Transverse colon (tissue), 4 donors: ENCODE measurements at regions of chr7 and their contacts with region 1.

Region 1: DNA sequence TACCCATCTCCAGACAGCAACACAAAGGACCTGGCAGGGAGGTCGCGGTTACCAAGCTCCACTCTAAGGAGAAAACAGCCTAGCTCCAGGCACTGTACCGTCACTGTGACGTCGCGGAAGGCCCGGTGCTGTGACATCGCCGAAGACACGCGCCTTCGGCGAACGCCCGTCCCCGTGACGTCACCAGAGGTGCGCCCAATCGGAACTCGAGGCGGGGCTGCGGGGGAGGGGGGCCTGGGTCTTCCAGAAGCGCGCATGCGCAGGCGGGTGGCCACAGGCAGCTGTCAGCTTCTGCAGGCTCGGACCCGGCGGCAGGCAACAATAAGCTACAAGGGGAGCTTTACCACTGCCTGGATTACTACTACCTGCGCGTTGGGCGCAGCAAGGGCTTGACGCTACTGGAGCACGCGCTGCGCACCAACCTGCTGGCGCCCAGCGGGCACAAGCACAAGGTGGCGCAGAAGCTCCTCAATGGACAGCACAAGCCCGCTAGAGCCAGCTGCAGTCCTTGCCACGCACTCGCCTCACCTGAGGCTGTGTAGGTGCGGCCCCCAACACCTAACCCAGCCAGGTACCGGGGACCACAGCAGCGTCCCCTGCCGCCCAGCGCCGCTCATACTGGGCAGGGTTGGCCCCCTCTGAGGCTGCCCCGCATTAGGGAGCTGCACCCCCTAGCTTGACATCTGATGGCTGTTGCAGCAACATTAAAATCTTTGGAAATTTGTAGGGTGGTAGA is 208.4 kb downstream of the TPST1 start:
- DNase-seq: peak; percentile 82
- H3K4me3 ChIP-seq: peak overlapping the region; percentile 19 to 52 (median 32)
- H3K27ac ChIP-seq: peak overlapping the region; percentile 32 to 52 (median 46)
- H3K4me1 ChIP-seq: peaks cover 8 to 17% (median 11%) of the 10 kb centered on the region in 4 donors
- H3K27me3 ChIP-seq: no peaks in the 10 kb centered on the region
- CTCF ChIP-seq: peak; percentile 39 to 75 (median 55)
- EP300 ChIP-seq: no peak
- POLR2A ChIP-seq: no peak

Region 2: GRCh38 chr7:66043681-66044497 is 369.7 kb before region 1 on chr7:
- in situ Hi-C with region 1: loop called in 1 of 4 experiments (anchors 25 kb)
- intact Hi-C with region 1: no loop called
- DNase-seq: peak; percentile 72
- H3K4me3 ChIP-seq: peak overlapping the region; percentile 3 to 56 (median 37)
- H3K27ac ChIP-seq: peak overlapping the region; percentile 44 to 64 (median 58)
- H3K4me1 ChIP-seq: peaks cover 0 to 19% (median 15%) of the 10 kb centered on the region in 4 donors
- H3K27me3 ChIP-seq: no peaks in the 10 kb centered on the region
- CTCF ChIP-seq: no peak
- EP300 ChIP-seq: no peak
- POLR2A ChIP-seq: peak; percentile 28

Region 3: GRCh38 chr7:66307591-66308215 is 105.8 kb before region 1 on chr7:
- in situ Hi-C with region 1: loop called in 1 of 4 experiments (anchors 25 kb)
- intact Hi-C with region 1: no loop called
- DNase-seq: no peak
- H3K4me3 ChIP-seq: no peak overlapping the region
- H3K27ac ChIP-seq: no peak overlapping the region
- H3K4me1 ChIP-seq: peaks cover 0 to 13% (median 2%) of the 10 kb centered on the region in 4 donors
- H3K27me3 ChIP-seq: no peaks in the 10 kb centered on the region
- CTCF ChIP-seq: no peak
- EP300 ChIP-seq: no peak
- POLR2A ChIP-seq: no peak

Region 4: GRCh38 chr7:66454600-66455225 is 41.2 kb after region 1 on chr7:
- in situ Hi-C with region 1: no loop called
- intact Hi-C with region 1: no loop called
- DNase-seq: no peak
- H3K4me3 ChIP-seq: no peak overlapping the region
- H3K27ac ChIP-seq: no peak overlapping the region
- H3K4me1 ChIP-seq: no peaks in the 10 kb centered on the region
- H3K27me3 ChIP-seq: no peaks in the 10 kb centered on the region
- CTCF ChIP-seq: no peak
- EP300 ChIP-seq: no peak
- POLR2A ChIP-seq: no peak